Ascending aorta (tissue), 2 donors: ENCODE measurements at regions of chr6 and their contacts with region 1.

Region 1: GRCh38 chr6:116570856-116571682 is at the start of gene RWDD1:
- DNase-seq: peak; percentile 96 to 99
- H3K4me3 ChIP-seq: peak within 1 kb of the TSS; percentile 68 to 74
- H3K27ac ChIP-seq: peak within 1 kb of the TSS; percentile 89 to 92
- H3K4me1 ChIP-seq: peaks cover 0 to 14% of the 10 kb centered on the region in 2 donors
- H3K27me3 ChIP-seq: no peaks in the 10 kb centered on the region
- CTCF ChIP-seq: peak in 2 of 3 experiments; percentile 13
- total RNA-seq, gene RWDD1: 11.0 TPM

Region 2: GRCh38 chr6:115634887-115635286 is 936.2 kb before region 1 on chr6:
- intact Hi-C with region 1: no loop called
- DNase-seq: no peak
- H3K4me3 ChIP-seq: no peak overlapping the region
- H3K27ac ChIP-seq: no peak overlapping the region
- H3K4me1 ChIP-seq: no peaks in the 10 kb centered on the region
- H3K27me3 ChIP-seq: no peaks in the 10 kb centered on the region
- CTCF ChIP-seq: no peak

Region 3: GRCh38 chr6:115885636-115886366 is 685.3 kb before region 1 on chr6:
- intact Hi-C with region 1: no loop called
- DNase-seq: no peak
- H3K4me3 ChIP-seq: no peak overlapping the region
- H3K27ac ChIP-seq: no peak overlapping the region
- H3K4me1 ChIP-seq: no peaks in the 10 kb centered on the region
- H3K27me3 ChIP-seq: no peaks in the 10 kb centered on the region
- CTCF ChIP-seq: no peak

Region 4: GRCh38 chr6:116511404-116512110 is 59.5 kb before region 1 on chr6 and contains the start of gene CALHM5:
- intact Hi-C with region 1: loop called (anchors 1 kb)
- DNase-seq: peak in 1 of 2 donors; percentile 81
- H3K4me3 ChIP-seq: peak within 1 kb of the TSS; percentile 58 to 69
- H3K27ac ChIP-seq: peak within 1 kb of the TSS; percentile 92 to 93
- H3K4me1 ChIP-seq: peaks cover 0 to 2% of the 10 kb centered on the region in 2 donors
- H3K27me3 ChIP-seq: no peaks in the 10 kb centered on the region
- CTCF ChIP-seq: peak; percentile 70 to 80 (median 76)
- total RNA-seq, gene CALHM5: 3.4 TPM

Region 5: DNA sequence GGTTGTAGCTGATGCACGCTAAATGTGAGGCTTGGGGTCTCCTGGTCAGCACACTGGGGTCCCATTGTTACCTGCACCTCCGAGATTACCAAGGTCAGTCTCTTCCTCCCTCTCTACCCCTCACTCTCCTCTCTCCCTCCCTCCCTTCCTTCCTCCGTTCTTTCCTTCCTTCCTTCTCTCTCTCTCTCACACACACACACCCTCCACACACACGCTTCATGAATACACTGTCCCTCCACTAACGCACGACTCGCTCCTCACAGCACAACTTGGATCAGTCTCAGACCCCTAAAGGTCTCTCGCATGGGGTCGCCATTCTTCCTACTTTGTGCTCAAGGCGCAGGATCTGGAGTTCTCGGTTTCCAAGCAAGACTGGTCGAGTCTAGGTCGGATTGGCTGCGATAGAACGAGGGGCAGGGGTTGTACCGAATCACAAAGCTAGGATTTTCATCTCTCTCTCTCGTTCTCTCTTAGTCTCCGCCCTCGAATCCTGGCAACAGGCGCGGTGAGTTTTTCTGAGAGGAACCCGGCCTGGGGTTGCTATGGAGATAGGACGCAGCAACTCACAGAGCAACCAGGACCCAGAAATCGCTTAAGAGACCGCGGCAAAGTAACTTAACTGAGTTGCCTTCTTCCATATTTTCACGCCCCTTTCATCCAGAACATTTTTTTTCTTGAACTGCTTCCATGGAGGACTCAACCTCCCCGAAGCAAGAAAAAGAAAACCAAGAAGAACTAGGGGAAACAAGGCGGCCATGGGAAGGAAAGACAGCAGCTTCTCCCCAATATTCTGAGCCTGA is 45.1 kb after region 1 on chr6 and contains the start of gene RSPH4A:
- intact Hi-C with region 1: loop called (anchors 2 kb)
- DNase-seq: peak; percentile 80 to 96
- H3K4me3 ChIP-seq: peak within 1 kb of the TSS; percentile 63 to 66
- H3K27ac ChIP-seq: no peak within 1 kb of the TSS
- H3K4me1 ChIP-seq: peaks cover 3 to 7% of the 10 kb centered on the region in 2 donors
- H3K27me3 ChIP-seq: no peaks in the 10 kb centered on the region
- CTCF ChIP-seq: peak in 1 of 3 experiments; percentile 12
- total RNA-seq, gene RSPH4A: 17.9 TPM

Region 6: GRCh38 chr6:116667623-116668022 is 96.6 kb after region 1 on chr6:
- intact Hi-C with region 1: loop called (anchors 5 kb)
- DNase-seq: no peak
- H3K4me3 ChIP-seq: peak overlapping the region; percentile 65 to 81
- H3K27ac ChIP-seq: no peak overlapping the region
- H3K4me1 ChIP-seq: peaks cover 0 to 20% of the 10 kb centered on the region in 2 donors
- H3K27me3 ChIP-seq: no peaks in the 10 kb centered on the region
- CTCF ChIP-seq: no peak